ENCODE measurements at regions of chr14 and their contacts with region 1.

Region 1: DNA sequence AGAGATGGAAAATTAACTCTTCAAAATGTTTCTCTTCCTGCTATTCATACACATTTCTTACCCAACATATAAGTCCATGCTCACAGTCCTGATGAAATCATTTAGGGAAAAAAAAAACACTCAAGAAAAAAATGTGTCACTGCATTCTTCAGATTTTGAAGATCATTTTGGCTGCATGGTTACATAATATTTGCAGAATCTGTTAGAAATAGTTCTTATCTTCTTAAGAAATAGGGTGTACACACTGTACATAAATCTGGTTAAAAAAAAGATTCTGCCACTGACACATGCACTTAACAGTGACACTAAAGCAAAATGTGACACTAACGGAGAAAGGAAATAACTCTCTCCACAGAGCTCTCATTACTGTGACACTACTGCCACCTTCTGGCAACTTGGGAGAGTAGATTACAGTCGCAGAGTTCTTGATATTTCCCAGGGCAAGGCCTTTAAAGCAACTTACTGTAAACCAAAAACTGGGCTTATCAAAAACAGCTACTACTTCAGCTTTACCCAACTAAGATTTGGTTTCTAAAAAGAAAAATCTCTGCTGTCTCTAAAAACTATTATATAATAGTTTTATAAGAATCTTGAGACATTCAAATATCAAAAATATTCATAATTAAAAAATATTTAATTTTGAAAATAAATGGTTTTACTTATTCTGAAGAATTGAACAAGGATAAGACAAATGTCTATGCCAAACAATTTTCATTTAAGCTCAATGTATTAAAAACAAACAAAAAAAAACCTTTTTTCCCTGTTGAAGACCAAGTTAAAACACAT is 65.0 kb downstream of the SETD3 start:
- DNase-seq: peak in 2 of 5 donors; percentile 46 to 48
- ATAC-seq: peak; percentile 51 to 84 (median 79)
- H3K4me3 ChIP-seq: no peak overlapping the region
- H3K27ac ChIP-seq: no peak overlapping the region
- H3K4me1 ChIP-seq: peaks cover 0 to 5% (median 0%) of the 10 kb centered on the region in 12 donors
- H3K27me3 ChIP-seq: no peaks in the 10 kb centered on the region
- CTCF ChIP-seq: peak; percentile 71 to 88 (median 79)
- POLR2A ChIP-seq: no peak

Region 2: GRCh38 chr14:99320105-99320572 is 95.5 kb before region 1 on chr14:
- intact Hi-C with region 1: loop called in 2 of 10 experiments (anchors 2 to 10 kb)
- DNase-seq: peak in 2 of 5 donors; percentile 46 to 76
- ATAC-seq: peak; percentile 23 to 63 (median 44)
- H3K4me3 ChIP-seq: no peak overlapping the region
- H3K27ac ChIP-seq: no peak overlapping the region
- H3K4me1 ChIP-seq: no peaks in the 10 kb centered on the region
- H3K27me3 ChIP-seq: peaks cover 0 to 18% (median 0%) of the 10 kb centered on the region in 9 donors
- CTCF ChIP-seq: peak; percentile 52 to 81 (median 66)
- POLR2A ChIP-seq: no peak

Region 3: GRCh38 chr14:99508896-99509629 is 93.4 kb after region 1 on chr14:
- intact Hi-C with region 1: no loop called
- DNase-seq: peak in 2 of 5 donors; percentile 25 to 33
- ATAC-seq: no peak
- H3K4me3 ChIP-seq: no peak overlapping the region
- H3K27ac ChIP-seq: no peak overlapping the region
- H3K4me1 ChIP-seq: peaks cover 0 to 19% (median 5%) of the 10 kb centered on the region in 12 donors
- H3K27me3 ChIP-seq: no peaks in the 10 kb centered on the region
- CTCF ChIP-seq: no peak
- POLR2A ChIP-seq: no peak

Region 4: DNA sequence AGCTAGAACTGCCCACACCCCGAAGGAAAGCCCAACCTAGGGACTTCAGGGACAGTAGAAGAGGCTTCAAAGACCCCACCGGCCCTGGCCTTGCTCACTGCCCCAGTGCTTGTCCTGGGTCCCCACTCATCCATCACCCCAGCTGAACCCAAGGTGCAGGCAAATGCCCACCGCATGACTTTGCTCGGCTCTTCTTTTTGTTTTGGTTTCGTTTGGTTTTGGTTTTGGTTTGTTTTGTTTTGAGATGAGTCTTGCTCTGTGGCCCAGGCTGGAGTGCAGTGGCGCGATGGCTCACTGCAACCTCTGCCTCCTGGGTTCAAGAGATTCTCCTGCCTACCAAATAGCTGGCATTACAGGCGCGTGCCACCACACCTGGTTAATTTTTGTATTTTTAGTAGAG is 179.3 kb after region 1 on chr14:
- intact Hi-C with region 1: no loop called
- DNase-seq: no peak
- ATAC-seq: no peak
- H3K4me3 ChIP-seq: peak overlapping the region in 1 of 12 donors; percentile 15
- H3K27ac ChIP-seq: peak overlapping the region in 5 of 12 donors; percentile 34 to 81 (median 75)
- H3K4me1 ChIP-seq: peaks cover 20 to 99% (median 81%) of the 10 kb centered on the region in 12 donors
- H3K27me3 ChIP-seq: no peaks in the 10 kb centered on the region
- CTCF ChIP-seq: no peak
- POLR2A ChIP-seq: no peak

Measured in heart left ventricle (tissue), 16 donors.